ENCODE measurements at regions of chr7 and their contacts with region 1.

Region 1: DNA sequence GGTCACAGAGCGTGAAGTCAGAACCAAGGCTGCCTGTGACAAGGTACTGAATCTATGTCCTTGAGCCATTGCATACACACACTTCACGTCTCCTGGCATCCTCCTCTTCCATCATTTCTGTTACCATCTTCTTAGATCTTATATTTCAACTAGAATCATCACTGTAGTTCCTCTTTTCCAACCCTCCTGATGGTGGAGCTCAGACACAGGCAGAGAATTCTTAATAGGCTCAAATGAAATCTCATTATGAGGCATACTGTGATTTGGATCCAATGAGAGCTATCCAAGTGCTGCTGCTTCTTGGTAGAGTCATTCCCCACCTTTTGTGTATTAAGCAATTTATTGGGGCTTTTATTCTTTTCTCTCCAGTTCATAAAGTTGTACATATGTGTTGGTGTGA is 113.2 kb downstream of the CALCR start:
- DNase-seq: no peak
- H3K4me3 ChIP-seq: no peak overlapping the region
- H3K27ac ChIP-seq: no peak overlapping the region
- H3K4me1 ChIP-seq: peaks cover 0 to 2% (median 0%) of the 10 kb centered on the region in 4 experiments; a peak in 1 of 7 replicates
- H3K27me3 ChIP-seq: no peaks in the 10 kb centered on the region
- CTCF ChIP-seq: peak in 2 of 3 experiments; percentile 45 to 48; a peak in 2 of 4 replicates
- EP300 ChIP-seq: no peak
- POLR2A ChIP-seq: no peak
- RAD21 ChIP-seq: peak; percentile 80

Region 2: GRCh38 chr7:93544691-93545090 is 83.3 kb after region 1 on chr7:
- CTCF ChIA-PET with region 1: interaction called, 14 read pairs
- POLR2A ChIA-PET with region 1: no interaction called
- DNase-seq: no peak
- H3K4me3 ChIP-seq: no peak overlapping the region
- H3K27ac ChIP-seq: no peak overlapping the region
- H3K4me1 ChIP-seq: peaks cover 0 to 5% (median 2%) of the 10 kb centered on the region in 4 experiments; a peak in 3 of 7 replicates
- H3K27me3 ChIP-seq: no peaks in the 10 kb centered on the region
- CTCF ChIP-seq: no peak
- EP300 ChIP-seq: no peak
- POLR2A ChIP-seq: no peak
- RAD21 ChIP-seq: no peak

Measured in H1 (cell line).